ENCODE measurements at regions of chr12 and their contacts with region 1.

Region 1: GRCh38 chr12:51961834-51962233 is 10.3 kb downstream of the ACVR1B start:
- DNase-seq: peak; percentile 79
- H3K4me3 ChIP-seq: no peak overlapping the region
- H3K27ac ChIP-seq: peak overlapping the region; percentile 47
- H3K4me1 ChIP-seq: peaks cover 15% of the 10 kb centered on the region
- H3K27me3 ChIP-seq: no peaks in the 10 kb centered on the region
- CTCF ChIP-seq: no peak

Region 2: DNA sequence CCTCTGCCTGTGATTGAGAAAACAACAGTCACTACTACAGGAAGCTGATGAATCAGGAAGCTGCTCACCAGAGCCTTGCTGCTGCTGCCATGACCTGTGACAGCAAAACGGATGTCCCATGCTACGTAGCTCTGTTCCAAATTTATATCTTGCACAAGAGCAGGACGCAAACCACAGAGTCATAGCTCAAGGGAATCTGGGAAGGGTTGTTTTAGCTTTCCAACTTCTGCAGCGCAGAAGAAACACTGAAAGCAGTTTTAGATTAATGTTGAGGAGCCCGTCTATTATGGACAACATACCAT is 75.9 kb before region 1 on chr12:
- CTCF ChIA-PET with region 1: no interaction called
- dilution Hi-C with region 1: loop called (anchors 5 kb)
- in situ Hi-C with region 1: no loop called
- intact Hi-C with region 1: no loop called
- DNase-seq: peak; percentile 73
- H3K4me3 ChIP-seq: no peak overlapping the region
- H3K27ac ChIP-seq: no peak overlapping the region
- H3K4me1 ChIP-seq: peaks cover 8% of the 10 kb centered on the region
- H3K27me3 ChIP-seq: no peaks in the 10 kb centered on the region
- CTCF ChIP-seq: no peak